ENCODE measurements at regions of chr12 and their contacts with region 1.

Region 1: GRCh38 chr12:102095675-102096263 is 24.1 kb downstream of the NUP37 start:
- DNase-seq: peak; percentile 4
- ATAC-seq: peak; percentile 92
- H3K4me3 ChIP-seq: no peak overlapping the region
- H3K27ac ChIP-seq: no peak overlapping the region
- H3K4me1 ChIP-seq: peaks cover 10% of the 10 kb centered on the region
- H3K27me3 ChIP-seq: no peaks in the 10 kb centered on the region
- CTCF ChIP-seq: peak; percentile 48 to 67 (median 51); a peak in 4 of 6 replicates
- EP300 ChIP-seq: no peak
- POLR2A ChIP-seq: no peak
- RAD21 ChIP-seq: peak; percentile 69

Region 2: GRCh38 chr12:101919447-101919846 is 176.3 kb before region 1 on chr12:
- CTCF ChIA-PET with region 1: interaction called, 7 read pairs
- POLR2A ChIA-PET with region 1: no interaction called
- RAD21 ChIA-PET with region 1: interaction called, 3 read pairs
- SMC1A ChIA-PET with region 1: interaction called, 14 read pairs
- in situ Hi-C with region 1: no loop called
- intact Hi-C with region 1: no loop called
- DNase-seq: no peak
- ATAC-seq: no peak
- H3K4me3 ChIP-seq: no peak overlapping the region
- H3K27ac ChIP-seq: no peak overlapping the region
- H3K4me1 ChIP-seq: peaks cover 26% of the 10 kb centered on the region
- H3K27me3 ChIP-seq: no peaks in the 10 kb centered on the region
- CTCF ChIP-seq: no peak
- EP300 ChIP-seq: no peak
- POLR2A ChIP-seq: no peak
- RAD21 ChIP-seq: no peak

Region 3: GRCh38 chr12:102169922-102170621 is 74.3 kb after region 1 on chr12:
- CTCF ChIA-PET with region 1: interaction called, 39 read pairs
- POLR2A ChIA-PET with region 1: no interaction called
- RAD21 ChIA-PET with region 1: interaction called, 6 read pairs
- SMC1A ChIA-PET with region 1: interaction called, 7 read pairs
- in situ Hi-C with region 1: no loop called
- intact Hi-C with region 1: no loop called
- DNase-seq: no peak
- ATAC-seq: peak; percentile 73
- H3K4me3 ChIP-seq: no peak overlapping the region
- H3K27ac ChIP-seq: no peak overlapping the region
- H3K4me1 ChIP-seq: peaks cover 5% of the 10 kb centered on the region
- H3K27me3 ChIP-seq: no peaks in the 10 kb centered on the region
- CTCF ChIP-seq: peak; percentile 72 to 79 (median 78)
- EP300 ChIP-seq: no peak
- POLR2A ChIP-seq: no peak
- RAD21 ChIP-seq: peak; percentile 80

Region 4: DNA sequence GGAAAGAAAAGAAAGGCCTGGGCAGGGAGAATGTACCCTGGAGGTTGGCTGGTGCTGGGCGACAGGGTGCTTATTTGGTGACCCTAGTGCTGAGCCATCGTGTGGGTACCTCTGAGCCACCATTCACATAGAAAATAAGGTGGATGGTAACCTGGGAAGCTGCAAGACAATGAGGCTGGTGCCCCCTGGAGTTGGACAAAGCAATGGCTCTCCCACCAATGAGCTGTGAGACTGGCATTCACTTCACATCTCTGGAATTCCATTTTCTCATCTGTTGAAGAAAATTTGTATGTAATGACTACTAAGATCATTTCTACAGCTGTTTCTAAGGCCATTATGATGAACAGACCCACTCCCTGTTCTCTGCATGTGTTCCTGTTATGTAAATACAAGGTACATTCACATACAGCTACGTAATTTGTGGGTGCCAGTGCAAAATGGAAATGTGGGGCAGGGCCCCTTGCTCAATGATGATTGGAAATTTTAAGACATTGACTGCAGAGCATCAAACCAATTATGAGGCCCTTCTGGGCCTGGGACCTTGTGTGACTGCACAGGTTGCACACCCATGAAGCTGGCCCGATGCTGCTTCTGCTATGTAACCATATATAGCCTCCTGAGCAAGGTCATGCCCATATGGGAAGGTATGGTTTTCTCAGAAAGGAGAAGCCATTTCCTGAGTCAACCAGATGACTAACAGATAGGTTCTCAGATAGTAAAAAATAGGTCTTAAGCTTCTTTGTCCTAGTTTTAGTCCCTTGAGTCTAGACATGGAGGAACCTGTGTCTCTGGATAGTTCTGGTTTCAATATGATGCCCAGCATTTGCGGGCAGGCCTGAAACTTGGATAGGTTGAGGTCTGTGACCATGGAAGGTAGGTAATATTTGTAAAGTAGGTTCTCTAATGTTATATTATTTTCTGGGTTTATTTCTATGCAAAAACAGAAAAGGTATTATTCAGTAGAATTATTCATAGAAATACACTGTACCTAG is 448.0 kb after region 1 on chr12:
- CTCF ChIA-PET with region 1: interaction called, 16 read pairs
- POLR2A ChIA-PET with region 1: no interaction called
- RAD21 ChIA-PET with region 1: interaction called, 10 read pairs
- SMC1A ChIA-PET with region 1: interaction called, 9 read pairs
- in situ Hi-C with region 1: no loop called
- intact Hi-C with region 1: no loop called
- DNase-seq: no peak
- ATAC-seq: peak; percentile 80
- H3K4me3 ChIP-seq: no peak overlapping the region
- H3K27ac ChIP-seq: no peak overlapping the region
- H3K4me1 ChIP-seq: peaks cover 6% of the 10 kb centered on the region
- H3K27me3 ChIP-seq: no peaks in the 10 kb centered on the region
- CTCF ChIP-seq: peak; percentile 42 to 46 (median 45); a peak in 5 of 6 replicates
- EP300 ChIP-seq: no peak
- POLR2A ChIP-seq: no peak
- RAD21 ChIP-seq: peak; percentile 62

Region 5: DNA sequence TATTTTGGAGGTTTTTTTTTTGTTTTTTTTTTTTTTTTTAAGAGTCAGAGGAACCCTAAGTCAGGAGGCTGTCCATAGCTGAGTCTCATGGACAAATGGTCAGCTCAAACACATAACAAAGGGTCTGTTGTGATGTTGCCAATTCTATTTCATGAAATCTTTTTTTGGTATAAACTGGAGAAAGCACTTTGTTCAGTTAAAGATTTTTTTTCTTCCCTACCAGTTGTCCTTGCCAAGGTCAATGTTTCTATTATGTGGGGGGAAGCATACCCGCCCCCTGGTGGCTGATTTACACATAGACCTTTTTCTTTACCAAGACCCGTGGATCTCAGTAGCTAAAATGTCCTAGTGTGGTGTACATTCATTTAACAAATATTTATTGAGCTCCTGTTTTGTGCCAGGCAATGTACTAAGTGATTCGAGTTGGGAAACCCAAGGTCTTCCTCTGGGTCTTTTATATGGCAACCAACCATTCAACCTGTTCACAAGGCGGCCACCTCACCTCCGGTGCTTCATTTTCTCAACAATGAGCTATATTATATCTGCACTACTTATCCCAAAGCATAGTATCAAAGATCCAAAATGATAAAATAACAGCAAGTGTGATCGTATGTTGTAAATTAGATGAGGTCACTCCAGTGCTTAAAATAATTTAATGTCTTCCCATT is 606.8 kb after region 1 on chr12:
- CTCF ChIA-PET with region 1: interaction called, 8 read pairs
- POLR2A ChIA-PET with region 1: no interaction called
- RAD21 ChIA-PET with region 1: interaction called, 5 read pairs
- SMC1A ChIA-PET with region 1: interaction called, 5 read pairs
- in situ Hi-C with region 1: no loop called
- intact Hi-C with region 1: loop called (anchors 5 kb)
- DNase-seq: no peak
- ATAC-seq: peak; percentile 78
- H3K4me3 ChIP-seq: no peak overlapping the region
- H3K27ac ChIP-seq: no peak overlapping the region
- H3K4me1 ChIP-seq: no peaks in the 10 kb centered on the region
- H3K27me3 ChIP-seq: no peaks in the 10 kb centered on the region
- CTCF ChIP-seq: peak; percentile 40 to 54 (median 49)
- EP300 ChIP-seq: no peak
- POLR2A ChIP-seq: no peak
- RAD21 ChIP-seq: peak; percentile 61

Region 6: GRCh38 chr12:102811110-102811737 is 715.5 kb after region 1 on chr12:
- CTCF ChIA-PET with region 1: interaction called, 30 read pairs
- POLR2A ChIA-PET with region 1: no interaction called
- RAD21 ChIA-PET with region 1: interaction called, 7 read pairs
- SMC1A ChIA-PET with region 1: interaction called, 7 read pairs
- in situ Hi-C with region 1: no loop called
- intact Hi-C with region 1: loop called (anchors 10 kb)
- DNase-seq: no peak
- ATAC-seq: peak; percentile 74
- H3K4me3 ChIP-seq: no peak overlapping the region
- H3K27ac ChIP-seq: no peak overlapping the region
- H3K4me1 ChIP-seq: no peaks in the 10 kb centered on the region
- H3K27me3 ChIP-seq: no peaks in the 10 kb centered on the region; a peak in 1 of 4 replicates
- CTCF ChIP-seq: peak; percentile 63 to 66 (median 64); a peak in 5 of 6 replicates
- EP300 ChIP-seq: no peak
- POLR2A ChIP-seq: no peak
- RAD21 ChIP-seq: peak; percentile 77

Region 7: GRCh38 chr12:102816816-102817434 is 721.2 kb after region 1 on chr12:
- CTCF ChIA-PET with region 1: interaction called, 30 read pairs
- POLR2A ChIA-PET with region 1: no interaction called
- RAD21 ChIA-PET with region 1: interaction called, 7 read pairs
- SMC1A ChIA-PET with region 1: no interaction called
- in situ Hi-C with region 1: no loop called
- intact Hi-C with region 1: loop called (anchors 10 kb)
- DNase-seq: no peak
- ATAC-seq: peak; percentile 76
- H3K4me3 ChIP-seq: no peak overlapping the region
- H3K27ac ChIP-seq: no peak overlapping the region
- H3K4me1 ChIP-seq: no peaks in the 10 kb centered on the region
- H3K27me3 ChIP-seq: no peaks in the 10 kb centered on the region; a peak in 1 of 4 replicates
- CTCF ChIP-seq: peak; percentile 53 to 61 (median 60)
- EP300 ChIP-seq: no peak
- POLR2A ChIP-seq: no peak
- RAD21 ChIP-seq: peak; percentile 49

Measured in GM12878 (cell line).